Transverse colon (tissue), 4 donors: ENCODE measurements at regions of chr3 and their contacts with region 1.

Region 1: DNA sequence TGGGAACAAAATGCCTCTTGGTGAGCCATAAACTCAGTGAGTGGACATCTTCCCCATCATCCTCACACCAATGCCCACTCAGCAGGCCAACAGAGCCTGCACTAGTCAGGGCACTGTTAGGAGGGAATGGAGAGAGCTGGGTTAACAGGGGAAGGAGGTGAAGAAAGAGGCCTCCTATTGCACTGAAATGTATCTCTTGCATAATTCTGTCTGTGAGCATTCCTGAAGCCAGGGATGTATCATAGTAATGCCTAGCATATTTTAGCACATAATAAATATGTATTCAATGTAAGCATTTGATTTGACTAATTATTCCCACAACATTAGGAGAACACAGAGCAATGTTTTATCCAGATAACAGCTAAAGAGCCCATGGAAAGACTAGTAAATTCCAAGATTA is 81.2 kb downstream of the ANO10 start:
- DNase-seq: no peak
- H3K4me3 ChIP-seq: no peak overlapping the region
- H3K27ac ChIP-seq: no peak overlapping the region
- H3K4me1 ChIP-seq: no peaks in the 10 kb centered on the region
- H3K27me3 ChIP-seq: no peaks in the 10 kb centered on the region
- CTCF ChIP-seq: no peak
- EP300 ChIP-seq: no peak
- POLR2A ChIP-seq: no peak

Region 2: GRCh38 chr3:43279082-43279481 is 261.5 kb before region 1 on chr3:
- in situ Hi-C with region 1: no loop called
- intact Hi-C with region 1: no loop called
- DNase-seq: no peak
- H3K4me3 ChIP-seq: no peak overlapping the region
- H3K27ac ChIP-seq: no peak overlapping the region
- H3K4me1 ChIP-seq: no peaks in the 10 kb centered on the region
- H3K27me3 ChIP-seq: no peaks in the 10 kb centered on the region
- CTCF ChIP-seq: no peak
- EP300 ChIP-seq: no peak
- POLR2A ChIP-seq: no peak

Region 3: GRCh38 chr3:43638594-43639447 is 98.2 kb after region 1 on chr3:
- in situ Hi-C with region 1: loop called in 1 of 4 experiments (anchors 10 kb)
- intact Hi-C with region 1: no loop called
- DNase-seq: peak; percentile 73
- H3K4me3 ChIP-seq: no peak overlapping the region
- H3K27ac ChIP-seq: no peak overlapping the region
- H3K4me1 ChIP-seq: no peaks in the 10 kb centered on the region
- H3K27me3 ChIP-seq: no peaks in the 10 kb centered on the region
- CTCF ChIP-seq: peak; percentile 35 to 73 (median 50)
- EP300 ChIP-seq: no peak
- POLR2A ChIP-seq: no peak

Region 4: GRCh38 chr3:44198284-44199269 is 658.0 kb after region 1 on chr3:
- in situ Hi-C with region 1: loop called in 3 of 4 experiments (anchors 10 to 25 kb)
- intact Hi-C with region 1: loop called (anchors 5 kb)
- DNase-seq: peak; percentile 68
- H3K4me3 ChIP-seq: no peak overlapping the region
- H3K27ac ChIP-seq: no peak overlapping the region
- H3K4me1 ChIP-seq: no peaks in the 10 kb centered on the region
- H3K27me3 ChIP-seq: peaks cover 11% of the 10 kb centered on the region
- CTCF ChIP-seq: peak; percentile 62 to 74 (median 69)
- EP300 ChIP-seq: no peak
- POLR2A ChIP-seq: no peak